Mammary epithelial cell (primary cell): ENCODE measurements at regions of chr3 and their contacts with region 1.

Region 1: GRCh38 chr3:36993326-36994283 is at the start of gene MLH1:
- DNase-seq: peak; percentile 100
- H3K4me3 ChIP-seq: peak within 1 kb of the TSS; percentile 78 to 98 (median 88)
- H3K27ac ChIP-seq: peak within 1 kb of the TSS; percentile 93
- H3K4me1 ChIP-seq: peaks cover 19% of the 10 kb centered on the region
- H3K27me3 ChIP-seq: no peaks in the 10 kb centered on the region
- CTCF ChIP-seq: no peak
- total RNA-seq, gene MLH1: 28.3 to 41.8 TPM

Region 2: DNA sequence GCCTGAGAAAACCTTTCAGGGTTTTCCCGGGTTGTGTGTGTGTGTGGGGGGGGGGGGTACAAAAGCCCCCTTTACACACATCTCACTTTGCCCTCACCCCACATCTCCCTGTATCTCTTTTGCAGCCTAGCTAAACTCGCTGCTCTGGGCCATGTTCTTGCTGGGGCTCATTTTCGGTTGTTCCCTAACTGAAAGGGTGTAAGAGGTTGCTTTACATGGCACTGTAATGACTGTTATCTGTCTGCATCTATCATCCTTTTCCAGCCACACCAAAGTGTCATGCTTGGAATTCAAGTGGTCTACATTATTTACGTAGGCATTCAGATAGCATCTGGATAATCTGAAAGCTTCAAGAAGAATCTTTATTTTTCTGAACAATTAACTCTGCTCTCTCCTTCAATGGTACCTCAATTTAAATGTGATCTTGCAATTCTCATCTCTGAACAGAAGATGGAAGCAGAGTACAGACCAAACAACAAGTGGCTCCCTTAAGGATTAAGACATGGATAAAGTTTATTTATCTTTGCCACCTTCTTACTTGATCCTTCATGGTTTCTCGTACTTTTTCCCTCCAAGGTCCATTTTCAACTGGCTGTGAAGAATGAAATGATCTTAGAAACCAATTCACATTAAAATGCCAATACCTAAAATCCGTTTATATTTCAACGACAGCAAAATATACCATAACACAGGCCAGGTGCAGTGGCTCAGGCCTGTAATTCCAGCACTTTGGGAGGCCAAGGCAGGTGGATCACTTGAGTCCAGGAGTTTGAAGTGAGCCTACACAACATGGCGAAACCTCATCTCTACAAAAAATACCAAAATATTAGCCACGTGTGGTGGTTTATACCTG is 264.2 kb before region 1 on chr3:
- CTCF ChIA-PET with region 1: no interaction called
- dilution Hi-C with region 1: no loop called
- in situ Hi-C with region 1: loop called in 1 of 2 experiments (anchors 25 kb)
- intact Hi-C with region 1: no loop called
- DNase-seq: peak; percentile 28
- H3K4me3 ChIP-seq: no peak overlapping the region
- H3K27ac ChIP-seq: no peak overlapping the region
- H3K4me1 ChIP-seq: no peaks in the 10 kb centered on the region
- H3K27me3 ChIP-seq: no peaks in the 10 kb centered on the region
- CTCF ChIP-seq: peak; percentile 66 to 69

Region 3: DNA sequence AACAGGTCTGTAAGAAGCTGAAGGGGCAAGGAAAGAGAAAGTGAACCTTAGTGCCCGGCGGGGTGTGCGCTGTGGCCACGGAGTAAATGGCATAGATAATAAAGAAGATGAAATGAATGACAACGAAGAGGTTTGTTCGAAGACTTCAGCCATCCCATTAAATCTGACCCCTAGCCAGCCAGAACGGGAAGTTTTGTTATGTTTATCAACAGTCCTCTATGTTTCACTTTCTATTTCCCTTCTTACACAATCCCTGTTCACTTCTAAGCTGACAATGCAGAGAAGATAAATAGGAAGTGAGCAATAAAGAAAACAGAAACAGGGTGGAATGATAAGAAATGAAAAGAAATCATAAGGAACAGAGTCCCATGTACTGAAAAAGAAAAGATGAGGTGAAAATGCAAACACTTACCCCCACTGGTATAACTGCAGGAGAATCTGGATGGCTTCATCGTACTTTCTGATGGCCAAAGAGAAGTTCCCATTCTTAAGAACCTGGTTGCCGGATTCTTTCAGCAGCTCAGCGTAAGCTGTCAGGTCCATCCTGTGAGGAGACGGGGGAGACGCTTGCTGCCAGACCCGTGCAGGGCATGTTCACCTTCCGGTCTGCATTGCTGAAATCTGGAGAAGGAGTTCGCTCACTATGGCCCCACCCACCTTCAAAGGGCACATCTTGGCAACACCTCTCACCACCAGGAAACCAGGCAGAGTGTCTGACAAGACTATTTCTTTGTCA is 85.5 kb before region 1 on chr3:
- CTCF ChIA-PET with region 1: no interaction called
- dilution Hi-C with region 1: no loop called
- in situ Hi-C with region 1: no loop called
- intact Hi-C with region 1: loop called (anchors 5 kb)
- DNase-seq: peak; percentile 44
- H3K4me3 ChIP-seq: no peak overlapping the region
- H3K27ac ChIP-seq: no peak overlapping the region
- H3K4me1 ChIP-seq: peaks cover 19% of the 10 kb centered on the region
- H3K27me3 ChIP-seq: no peaks in the 10 kb centered on the region
- CTCF ChIP-seq: no peak